Naive thymus-derived CD8-positive, alpha-beta T cell (primary cell): ENCODE measurements at regions of chr20 and their contacts with region 1.

Region 1: GRCh38 chr20:36932476-36933426 is 18.8 kb downstream of the SAMHD1 start:
- DNase-seq: no peak
- ATAC-seq: no peak
- H3K4me3 Mint-ChIP-seq: peak overlapping the region in 8 of 10 donors; percentile 2 to 60 (median 40)
- H3K27ac Mint-ChIP-seq: peak overlapping the region; percentile 85 to 100 (median 94)
- H3K4me1 Mint-ChIP-seq: peaks cover 19 to 75% (median 51%) of the 10 kb centered on the region in 4 donors
- H3K27me3 Mint-ChIP-seq: no peaks in the 10 kb centered on the region

Region 2: GRCh38 chr20:36919715-36920333 is 12.9 kb before region 1 on chr20:
- POLR2A ChIA-PET with region 1: interaction called, 13 read pairs
- DNase-seq: peak in 6 of 10 donors; percentile 23 to 69 (median 54)
- ATAC-seq: peak; percentile 77
- H3K4me3 Mint-ChIP-seq: peak overlapping the region in 3 of 10 donors; percentile 14 to 57 (median 28)
- H3K27ac Mint-ChIP-seq: peak overlapping the region in 9 of 10 donors; percentile 80 to 91 (median 88)
- H3K4me1 Mint-ChIP-seq: peaks cover 8 to 40% (median 22%) of the 10 kb centered on the region in 4 donors
- H3K27me3 Mint-ChIP-seq: no peaks in the 10 kb centered on the region

Region 3: DNA sequence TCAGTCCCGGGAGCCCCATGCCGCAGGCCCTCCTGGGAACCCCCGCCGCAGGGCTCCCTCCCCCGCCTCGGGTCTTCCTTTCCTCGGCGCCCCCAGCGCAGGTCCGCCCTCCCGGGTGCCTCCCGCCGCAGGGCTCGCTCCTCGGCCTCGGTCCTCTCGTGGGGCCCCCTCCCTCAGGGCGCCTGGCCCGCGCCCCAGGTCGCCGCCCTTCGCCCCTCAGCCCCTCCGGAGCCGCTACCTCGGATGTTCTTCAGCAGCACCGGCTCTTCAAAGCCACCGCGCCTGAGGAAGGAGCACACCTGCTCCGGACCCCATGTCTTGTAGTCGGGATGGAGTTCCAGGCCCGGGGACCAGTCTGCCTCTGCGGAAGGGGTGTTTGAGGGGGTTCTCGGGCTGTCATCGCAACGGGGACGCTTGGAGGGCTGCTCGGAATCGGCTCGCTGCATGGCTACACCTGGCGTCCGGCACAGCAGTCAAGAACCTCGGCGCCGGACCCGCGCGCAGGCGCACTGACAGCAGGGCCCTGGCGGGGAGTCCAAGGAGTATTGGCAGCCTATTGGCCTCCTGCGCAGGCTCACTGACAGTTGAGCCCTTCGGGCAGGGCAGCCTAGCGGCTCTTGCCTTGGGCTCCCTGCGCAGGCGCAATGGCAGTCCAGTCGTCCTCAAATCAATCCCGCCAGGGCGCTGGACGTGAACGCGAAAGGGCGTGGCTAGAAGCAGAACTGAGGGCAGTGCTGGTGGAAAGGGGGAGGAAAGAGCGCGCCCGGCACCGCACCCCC is 18.6 kb after region 1 on chr20 and contains the start of gene SAMHD1:
- POLR2A ChIA-PET with region 1: interaction called, 24 read pairs
- DNase-seq: peak; percentile 66 to 90 (median 82)
- ATAC-seq: peak; percentile 71 to 76
- H3K4me3 Mint-ChIP-seq: peak within 1 kb of the TSS; percentile 88 to 100 (median 97)
- H3K27ac Mint-ChIP-seq: peak within 1 kb of the TSS; percentile 94 to 99 (median 98)
- H3K4me1 Mint-ChIP-seq: peaks cover 17 to 62% (median 47%) of the 10 kb centered on the region in 4 donors
- H3K27me3 Mint-ChIP-seq: no peaks in the 10 kb centered on the region
- polyA plus RNA-seq, gene SAMHD1: 212 to 247 (median 219) TPM

Region 4: DNA sequence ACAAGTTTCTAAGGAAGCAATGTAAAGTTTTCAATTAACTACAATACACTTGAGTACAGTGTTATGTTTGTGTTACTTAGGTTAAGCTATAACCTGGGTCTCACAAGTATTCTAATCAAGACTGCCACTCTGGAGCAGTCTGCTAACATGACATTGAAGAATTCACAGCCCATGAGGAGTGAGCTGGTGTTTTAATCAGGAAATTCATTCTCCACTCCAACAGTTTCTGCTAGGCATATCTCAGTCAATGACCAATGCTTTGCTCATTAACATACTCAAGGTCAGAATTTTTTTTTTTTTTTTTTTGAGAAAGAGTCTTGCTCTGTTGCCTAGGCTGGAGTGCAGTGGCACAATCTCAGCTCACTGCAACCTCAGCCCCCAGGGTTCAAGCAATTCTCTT is 78.4 kb after region 1 on chr20:
- POLR2A ChIA-PET with region 1: interaction called, 10 read pairs
- DNase-seq: no peak
- ATAC-seq: no peak
- H3K4me3 Mint-ChIP-seq: no peak overlapping the region
- H3K27ac Mint-ChIP-seq: peak overlapping the region in 8 of 10 donors; percentile 48 to 82 (median 64)
- H3K4me1 Mint-ChIP-seq: peaks cover 7 to 54% (median 30%) of the 10 kb centered on the region in 4 donors
- H3K27me3 Mint-ChIP-seq: no peaks in the 10 kb centered on the region

Region 5: GRCh38 chr20:37042986-37043972 is 110.5 kb after region 1 on chr20:
- POLR2A ChIA-PET with region 1: interaction called, 11 read pairs
- DNase-seq: peak in 3 of 10 donors; percentile 49 to 56 (median 51)
- ATAC-seq: peak; percentile 76 to 77
- H3K4me3 Mint-ChIP-seq: peak overlapping the region; percentile 77 to 93 (median 88)
- H3K27ac Mint-ChIP-seq: peak overlapping the region; percentile 86 to 97 (median 92)
- H3K4me1 Mint-ChIP-seq: peaks cover 7 to 37% (median 24%) of the 10 kb centered on the region in 4 donors
- H3K27me3 Mint-ChIP-seq: no peaks in the 10 kb centered on the region